ENCODE measurements at regions of chr11 and their contacts with region 1.

Region 1: GRCh38 chr11:66438504-66439466 is at the start of gene MRPL11:
- DNase-seq: peak; percentile 95
- ATAC-seq: peak; percentile 98
- H3K4me3 Mint-ChIP-seq: peak within 1 kb of the TSS; percentile 95
- H3K27ac Mint-ChIP-seq: peak within 1 kb of the TSS; percentile 99
- H3K4me1 Mint-ChIP-seq: peaks cover 10% of the 10 kb centered on the region
- H3K27me3 Mint-ChIP-seq: peaks cover 7% of the 10 kb centered on the region
- CTCF ChIP-seq: no peak; the same call in 1 of the 2 replicates
- total RNA-seq, gene MRPL11: 131 to 137 TPM (median 135 TPM) in 3 replicates

Region 2: GRCh38 chr11:66371627-66372415 is 67.0 kb before region 1 on chr11 and contains the start of gene SLC29A2:
- CTCF ChIA-PET with region 1: interaction called, 11 read pairs
- POLR2A ChIA-PET with region 1: no interaction called
- DNase-seq: peak; percentile 98
- ATAC-seq: peak; percentile 88
- H3K4me3 Mint-ChIP-seq: peak within 1 kb of the TSS; percentile 95
- H3K27ac Mint-ChIP-seq: peak within 1 kb of the TSS; percentile 96
- H3K4me1 Mint-ChIP-seq: peaks cover 27% of the 10 kb centered on the region
- H3K27me3 Mint-ChIP-seq: no peaks in the 10 kb centered on the region
- CTCF ChIP-seq: no peak
- total RNA-seq, gene SLC29A2: 30.2 to 36.6 TPM (median 35.3 TPM) in 3 replicates

Region 3: DNA sequence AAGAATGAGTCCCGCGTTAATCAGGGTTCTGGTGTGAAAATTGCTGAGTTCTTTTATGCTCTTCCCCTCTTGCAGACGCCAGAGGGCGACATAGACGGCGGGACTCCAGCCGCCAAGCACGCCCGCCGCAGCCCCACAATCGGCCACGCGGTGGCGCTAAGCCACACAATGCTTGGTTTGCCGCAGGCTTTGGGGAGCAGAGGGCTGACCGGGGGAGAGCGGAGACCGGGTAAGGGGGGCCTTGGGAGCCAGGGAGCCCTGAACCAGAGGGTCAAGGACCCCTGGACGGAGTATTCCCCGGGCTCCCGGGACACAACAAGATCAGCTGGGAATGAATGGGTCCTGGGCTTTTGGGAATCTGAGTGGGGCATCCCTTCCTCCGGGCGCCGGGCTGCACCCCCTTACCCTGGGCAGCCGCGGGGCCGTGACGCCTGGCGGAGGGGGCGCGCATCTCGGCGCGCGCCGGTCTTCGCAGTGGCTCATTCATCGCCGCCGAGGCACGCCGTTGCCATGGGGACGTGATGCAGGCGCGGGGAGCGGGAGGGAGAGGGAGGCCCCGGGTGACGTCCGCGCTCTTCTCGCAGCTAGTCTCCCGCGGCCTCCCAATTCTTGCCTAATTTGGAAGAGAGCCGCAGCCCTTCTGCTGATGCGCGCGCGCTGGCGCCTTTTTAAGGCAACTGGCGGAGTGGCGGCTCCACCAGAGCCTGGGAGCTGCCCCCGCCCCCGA is 30.1 kb before region 1 on chr11:
- CTCF ChIA-PET with region 1: interaction called, 30 read pairs
- POLR2A ChIA-PET with region 1: interaction called, 5 read pairs
- DNase-seq: peak; percentile 97
- ATAC-seq: peak; percentile 76
- H3K4me3 Mint-ChIP-seq: peak overlapping the region; percentile 66
- H3K27ac Mint-ChIP-seq: no peak overlapping the region
- H3K4me1 Mint-ChIP-seq: peaks cover 10% of the 10 kb centered on the region
- H3K27me3 Mint-ChIP-seq: peaks cover 34% of the 10 kb centered on the region
- CTCF ChIP-seq: peak; percentile 99

Region 4: GRCh38 chr11:66421492-66422205 is 17.1 kb before region 1 on chr11:
- CTCF ChIA-PET with region 1: interaction called, 31 read pairs
- POLR2A ChIA-PET with region 1: interaction called, 8 read pairs
- DNase-seq: peak; percentile 95
- ATAC-seq: peak; percentile 55
- H3K4me3 Mint-ChIP-seq: peak overlapping the region; percentile 68
- H3K27ac Mint-ChIP-seq: no peak overlapping the region
- H3K4me1 Mint-ChIP-seq: peaks cover 27% of the 10 kb centered on the region
- H3K27me3 Mint-ChIP-seq: peaks cover 77% of the 10 kb centered on the region
- CTCF ChIP-seq: no peak

Region 5: GRCh38 chr11:66466225-66467027 is 27.6 kb after region 1 on chr11 and contains the start of gene PELI3:
- CTCF ChIA-PET with region 1: interaction called, 52 read pairs
- POLR2A ChIA-PET with region 1: interaction called, 14 read pairs
- DNase-seq: peak; percentile 98
- ATAC-seq: peak; percentile 94
- H3K4me3 Mint-ChIP-seq: peak within 1 kb of the TSS; percentile 88
- H3K27ac Mint-ChIP-seq: peak within 1 kb of the TSS; percentile 90
- H3K4me1 Mint-ChIP-seq: peaks cover 43% of the 10 kb centered on the region
- H3K27me3 Mint-ChIP-seq: no peaks in the 10 kb centered on the region; the same call in 1 of the 2 replicates
- CTCF ChIP-seq: no peak
- total RNA-seq, gene PELI3: 6.7 to 7.8 TPM (median 6.8 TPM) in 3 replicates

Measured in WTC11 (cell line).